A673 (cell line): ENCODE measurements at regions of chr12 and their contacts with region 1.

Region 1: GRCh38 chr12:132133952-132134625 is 10.0 kb downstream of the DDX51 start:
- DNase-seq: no peak
- H3K4me3 ChIP-seq: no peak overlapping the region
- H3K27ac ChIP-seq: no peak overlapping the region
- H3K4me1 ChIP-seq: no peaks in the 10 kb centered on the region
- H3K27me3 ChIP-seq: no peaks in the 10 kb centered on the region
- CTCF ChIP-seq: no peak

Region 2: GRCh38 chr12:131894313-131894860 is 239.7 kb before region 1 on chr12 and contains the start of gene ULK1:
- CTCF ChIA-PET with region 1: no interaction called
- POLR2A ChIA-PET with region 1: no interaction called
- intact Hi-C with region 1: no loop called
- DNase-seq: peak; percentile 95
- H3K4me3 ChIP-seq: peak within 1 kb of the TSS; percentile 70
- H3K27ac ChIP-seq: peak within 1 kb of the TSS; percentile 76
- H3K4me1 ChIP-seq: peaks cover 12% of the 10 kb centered on the region
- H3K27me3 ChIP-seq: no peaks in the 10 kb centered on the region
- CTCF ChIP-seq: no peak
- total RNA-seq, gene ULK1: 56.1 and 57.3 TPM in 2 replicates

Region 3: GRCh38 chr12:132095520-132096384 is 38.3 kb before region 1 on chr12:
- CTCF ChIA-PET with region 1: no interaction called
- POLR2A ChIA-PET with region 1: no interaction called
- intact Hi-C with region 1: loop called (anchors 5 kb)
- DNase-seq: no peak
- H3K4me3 ChIP-seq: no peak overlapping the region
- H3K27ac ChIP-seq: no peak overlapping the region
- H3K4me1 ChIP-seq: no peaks in the 10 kb centered on the region
- H3K27me3 ChIP-seq: no peaks in the 10 kb centered on the region
- CTCF ChIP-seq: no peak

Region 4: GRCh38 chr12:132632501-132633228 is 498.6 kb after region 1 on chr12:
- CTCF ChIA-PET with region 1: no interaction called
- POLR2A ChIA-PET with region 1: no interaction called
- intact Hi-C with region 1: no loop called
- DNase-seq: no peak
- H3K4me3 ChIP-seq: no peak overlapping the region
- H3K27ac ChIP-seq: no peak overlapping the region
- H3K4me1 ChIP-seq: no peaks in the 10 kb centered on the region
- H3K27me3 ChIP-seq: no peaks in the 10 kb centered on the region
- CTCF ChIP-seq: no peak